Activated CD4-positive, alpha-beta memory T cell treated with anti-CD3 and anti-CD28 coated beads, Interleukin-2, amount 10 ng/mL, durations not matched to agents 7 days and 5 days (primary cell): ENCODE measurements at regions of chr4 and their contacts with region 1.

Region 1: GRCh38 chr4:145618932-145619638 is at the start of gene MMAA:
- DNase-seq: peak; percentile 95
- H3K4me3 Mint-ChIP-seq: peak within 1 kb of the TSS; percentile 98
- H3K27ac Mint-ChIP-seq: peak within 1 kb of the TSS; percentile 99
- H3K4me1 Mint-ChIP-seq: peaks cover 43% of the 10 kb centered on the region
- H3K27me3 Mint-ChIP-seq: no peaks in the 10 kb centered on the region
- total RNA-seq, gene MMAA: 11.3 to 13.5 TPM

Region 2: DNA sequence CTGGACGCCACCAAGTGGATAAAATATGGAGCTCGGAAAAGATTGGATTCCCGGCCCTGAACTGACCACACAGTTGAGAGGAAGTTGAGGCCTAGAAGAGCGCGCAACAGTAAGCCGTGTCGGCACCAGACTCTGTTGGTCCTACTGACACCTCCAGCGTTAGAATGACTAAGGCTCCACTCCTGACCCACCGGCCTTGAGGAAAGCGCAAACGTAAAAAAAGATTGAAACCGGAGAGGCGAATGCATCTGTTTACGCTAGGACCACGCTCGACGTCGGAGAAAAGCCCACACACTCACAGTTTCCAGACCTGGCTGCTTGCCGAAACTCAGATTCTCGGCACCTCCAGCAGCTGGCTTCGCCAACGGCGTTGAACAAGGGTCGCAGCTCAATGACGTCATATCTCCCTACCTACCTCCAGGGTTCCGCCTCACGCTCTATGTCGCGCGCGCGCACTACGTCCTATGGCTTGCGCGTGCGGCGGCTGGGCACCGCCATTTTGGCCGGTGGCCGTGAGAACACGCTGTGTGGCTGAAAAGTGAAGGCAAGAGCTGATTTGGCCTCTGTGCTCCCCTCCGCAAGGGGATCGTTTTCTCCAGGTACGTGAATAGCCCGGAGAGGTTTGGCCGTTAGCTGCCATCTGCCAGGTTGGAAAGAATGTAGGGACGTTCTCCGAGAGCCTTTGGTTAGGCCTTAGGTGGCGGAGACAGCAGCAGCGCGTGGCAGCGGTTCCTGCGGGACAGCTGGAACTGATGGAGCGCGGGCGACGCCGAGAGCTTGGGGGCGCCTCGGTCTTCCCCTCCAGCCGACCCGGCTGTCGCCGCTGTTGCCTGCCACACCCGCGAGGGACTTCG is 521.0 kb before region 1 on chr4 and contains the starts of genes ABCE1 and ANAPC10:
- CTCF ChIA-PET with region 1: interaction called, 4 read pairs
- POLR2A ChIA-PET with region 1: interaction called, 20 read pairs
- DNase-seq: peak; percentile 96
- H3K4me3 Mint-ChIP-seq: peak within 1 kb of the TSS; percentile 85
- H3K27ac Mint-ChIP-seq: peak within 1 kb of the TSS; percentile 96
- H3K4me1 Mint-ChIP-seq: peaks cover 33% of the 10 kb centered on the region
- H3K27me3 Mint-ChIP-seq: no peaks in the 10 kb centered on the region
- total RNA-seq, gene ABCE1: 60.6 to 63.3 TPM
- total RNA-seq, gene ANAPC10: 22.4 to 28.4 TPM

Region 3: GRCh38 chr4:145180298-145181090 is 438.6 kb before region 1 on chr4 and contains the start of gene OTUD4:
- CTCF ChIA-PET with region 1: interaction called, 5 read pairs
- POLR2A ChIA-PET with region 1: interaction called, 54 read pairs
- DNase-seq: peak; percentile 96
- H3K4me3 Mint-ChIP-seq: peak within 1 kb of the TSS; percentile 87
- H3K27ac Mint-ChIP-seq: peak within 1 kb of the TSS; percentile 95
- H3K4me1 Mint-ChIP-seq: peaks cover 25% of the 10 kb centered on the region
- H3K27me3 Mint-ChIP-seq: no peaks in the 10 kb centered on the region
- total RNA-seq, gene OTUD4: 45.8 to 51.2 TPM

Region 4: DNA sequence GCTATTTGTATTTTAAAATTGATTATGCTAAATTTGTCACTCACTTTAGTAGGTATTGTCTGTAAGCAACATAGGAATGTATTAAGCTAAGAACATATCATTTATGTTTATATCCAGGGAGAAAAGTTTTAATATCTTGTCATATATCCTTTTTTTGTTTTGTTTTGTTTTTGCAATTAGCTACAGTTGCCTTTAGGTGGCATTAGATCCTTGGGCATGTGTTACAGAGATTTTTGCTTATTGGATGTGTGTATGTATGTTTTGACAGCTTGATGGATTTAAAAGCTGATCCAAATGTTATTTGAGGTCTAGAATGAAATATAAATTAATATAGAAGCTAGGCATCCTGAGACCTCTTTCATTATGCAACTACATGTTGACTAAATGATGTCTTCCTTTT is 402.6 kb before region 1 on chr4:
- CTCF ChIA-PET with region 1: interaction called, 14 read pairs
- POLR2A ChIA-PET with region 1: no interaction called
- DNase-seq: no peak
- H3K4me3 Mint-ChIP-seq: no peak overlapping the region
- H3K27ac Mint-ChIP-seq: no peak overlapping the region
- H3K4me1 Mint-ChIP-seq: no peaks in the 10 kb centered on the region
- H3K27me3 Mint-ChIP-seq: peaks cover 8% of the 10 kb centered on the region

Region 5: GRCh38 chr4:145234091-145234706 is 384.9 kb before region 1 on chr4:
- CTCF ChIA-PET with region 1: interaction called, 13 read pairs
- POLR2A ChIA-PET with region 1: interaction called, 6 read pairs
- DNase-seq: peak; percentile 57
- H3K4me3 Mint-ChIP-seq: no peak overlapping the region
- H3K27ac Mint-ChIP-seq: no peak overlapping the region
- H3K4me1 Mint-ChIP-seq: no peaks in the 10 kb centered on the region
- H3K27me3 Mint-ChIP-seq: peaks cover 16% of the 10 kb centered on the region

Region 6: DNA sequence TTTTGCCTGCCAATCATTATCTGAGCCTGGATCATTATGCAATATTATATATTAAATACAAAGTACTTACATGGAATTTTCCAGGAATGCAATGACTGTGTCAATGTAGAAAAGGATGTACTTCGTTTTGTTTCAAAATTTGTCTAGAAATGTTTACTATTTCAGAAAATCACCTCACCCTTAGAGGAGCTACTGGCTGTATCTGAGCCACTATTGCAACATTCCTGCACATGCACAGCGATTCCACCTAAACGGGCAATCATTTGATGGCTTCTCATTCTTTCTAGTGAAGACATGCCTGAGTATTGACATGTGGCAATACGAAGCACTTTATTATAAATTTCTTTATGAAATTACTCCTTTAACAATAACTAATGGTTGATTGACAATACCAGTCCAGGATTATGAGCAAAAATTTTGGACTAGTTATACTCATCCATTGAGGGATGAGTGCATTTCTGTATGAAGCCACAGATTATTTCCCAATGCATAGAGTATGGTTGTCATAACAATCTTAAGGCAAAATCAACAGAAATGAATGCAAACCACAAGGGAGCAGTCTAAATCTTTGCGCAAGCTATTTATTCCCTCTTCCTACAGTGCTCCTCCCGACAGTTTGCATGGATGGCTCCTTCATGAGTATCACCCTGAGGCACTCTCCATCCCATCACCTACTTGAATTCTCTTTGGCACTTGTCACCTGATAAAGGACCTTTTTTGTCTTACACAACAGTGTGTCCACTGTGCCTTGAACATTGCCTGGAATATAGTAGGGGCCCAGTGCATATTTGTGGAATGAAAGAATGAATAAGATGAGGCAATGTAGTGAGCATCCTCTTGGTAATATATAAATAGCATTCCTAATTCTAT is 35.7 kb before region 1 on chr4:
- CTCF ChIA-PET with region 1: no interaction called
- POLR2A ChIA-PET with region 1: no interaction called
- DNase-seq: no peak
- H3K4me3 Mint-ChIP-seq: no peak overlapping the region
- H3K27ac Mint-ChIP-seq: no peak overlapping the region
- H3K4me1 Mint-ChIP-seq: no peaks in the 10 kb centered on the region
- H3K27me3 Mint-ChIP-seq: peaks cover 17% of the 10 kb centered on the region

Region 7: GRCh38 chr4:145936142-145936996 is 317.3 kb after region 1 on chr4:
- CTCF ChIA-PET with region 1: interaction called, 4 read pairs
- POLR2A ChIA-PET with region 1: interaction called, 26 read pairs
- DNase-seq: peak; percentile 65
- H3K4me3 Mint-ChIP-seq: peak overlapping the region; percentile 91
- H3K27ac Mint-ChIP-seq: peak overlapping the region; percentile 73
- H3K4me1 Mint-ChIP-seq: peaks cover 26% of the 10 kb centered on the region
- H3K27me3 Mint-ChIP-seq: peaks cover 12% of the 10 kb centered on the region